ENCODE measurements at regions of chr1 and their contacts with region 1.

Region 1: DNA sequence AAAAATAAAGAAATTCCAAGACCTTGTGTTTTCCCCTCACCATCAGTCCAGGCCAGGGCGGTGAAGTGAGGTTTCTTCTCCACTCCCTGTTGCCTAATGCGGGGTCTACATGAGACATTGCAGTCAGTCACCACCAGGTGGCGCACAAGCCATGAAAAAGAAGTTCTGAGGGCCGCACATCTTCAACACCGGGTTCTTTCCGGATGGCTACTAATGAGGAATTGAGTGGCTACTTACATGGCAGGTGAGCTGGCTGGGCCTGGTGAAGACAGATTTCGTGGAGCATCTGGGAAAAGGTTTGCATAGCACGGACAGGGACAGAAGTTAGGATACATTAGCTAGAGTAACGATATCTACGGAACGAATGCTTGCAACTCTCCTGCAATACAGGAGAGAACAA is 15.8 kb upstream of the S100A11 start:
- DNase-seq: peak; percentile 90
- ATAC-seq: peak; percentile 64
- H3K4me3 ChIP-seq: no peak overlapping the region
- H3K27ac ChIP-seq: no peak overlapping the region
- H3K4me1 ChIP-seq: peaks cover 14% of the 10 kb centered on the region
- H3K27me3 ChIP-seq: peaks cover 29% of the 10 kb centered on the region
- CTCF ChIP-seq: peak; percentile 94

Region 2: GRCh38 chr1:152408667-152409165 is 356.1 kb after region 1 on chr1:
- intact Hi-C with region 1: no loop called
- DNase-seq: no peak
- ATAC-seq: no peak
- H3K4me3 ChIP-seq: no peak overlapping the region
- H3K27ac ChIP-seq: no peak overlapping the region
- H3K4me1 ChIP-seq: peaks cover 4% of the 10 kb centered on the region
- H3K27me3 ChIP-seq: no peaks in the 10 kb centered on the region
- CTCF ChIP-seq: no peak

Region 3: GRCh38 chr1:152459596-152460528 is 407.3 kb after region 1 on chr1:
- intact Hi-C with region 1: loop called (anchors 10 kb)
- DNase-seq: peak; percentile 86
- ATAC-seq: peak; percentile 90
- H3K4me3 ChIP-seq: peak overlapping the region; percentile 17
- H3K27ac ChIP-seq: peak overlapping the region; percentile 42
- H3K4me1 ChIP-seq: peaks cover 9% of the 10 kb centered on the region
- H3K27me3 ChIP-seq: no peaks in the 10 kb centered on the region
- CTCF ChIP-seq: peak; percentile 83

Measured in upper lobe of right lung (tissue), 1 donor.